ENCODE measurements at regions of chr17 and their contacts with region 1.

Region 1: GRCh38 chr17:8745586-8746500 is 1.2 kb upstream of the CCDC42 start:
- DNase-seq: peak; percentile 83
- H3K4me3 ChIP-seq: peak overlapping the region; percentile 43 to 75 (median 60)
- H3K27ac ChIP-seq: peak overlapping the region in 2 of 4 donors; percentile 8 to 53
- H3K4me1 ChIP-seq: peaks cover 0 to 15% (median 11%) of the 10 kb centered on the region in 4 donors
- H3K27me3 ChIP-seq: no peaks in the 10 kb centered on the region
- CTCF ChIP-seq: peak; percentile 79 to 98 (median 82)
- EP300 ChIP-seq: no peak
- POLR2A ChIP-seq: no peak

Region 2: DNA sequence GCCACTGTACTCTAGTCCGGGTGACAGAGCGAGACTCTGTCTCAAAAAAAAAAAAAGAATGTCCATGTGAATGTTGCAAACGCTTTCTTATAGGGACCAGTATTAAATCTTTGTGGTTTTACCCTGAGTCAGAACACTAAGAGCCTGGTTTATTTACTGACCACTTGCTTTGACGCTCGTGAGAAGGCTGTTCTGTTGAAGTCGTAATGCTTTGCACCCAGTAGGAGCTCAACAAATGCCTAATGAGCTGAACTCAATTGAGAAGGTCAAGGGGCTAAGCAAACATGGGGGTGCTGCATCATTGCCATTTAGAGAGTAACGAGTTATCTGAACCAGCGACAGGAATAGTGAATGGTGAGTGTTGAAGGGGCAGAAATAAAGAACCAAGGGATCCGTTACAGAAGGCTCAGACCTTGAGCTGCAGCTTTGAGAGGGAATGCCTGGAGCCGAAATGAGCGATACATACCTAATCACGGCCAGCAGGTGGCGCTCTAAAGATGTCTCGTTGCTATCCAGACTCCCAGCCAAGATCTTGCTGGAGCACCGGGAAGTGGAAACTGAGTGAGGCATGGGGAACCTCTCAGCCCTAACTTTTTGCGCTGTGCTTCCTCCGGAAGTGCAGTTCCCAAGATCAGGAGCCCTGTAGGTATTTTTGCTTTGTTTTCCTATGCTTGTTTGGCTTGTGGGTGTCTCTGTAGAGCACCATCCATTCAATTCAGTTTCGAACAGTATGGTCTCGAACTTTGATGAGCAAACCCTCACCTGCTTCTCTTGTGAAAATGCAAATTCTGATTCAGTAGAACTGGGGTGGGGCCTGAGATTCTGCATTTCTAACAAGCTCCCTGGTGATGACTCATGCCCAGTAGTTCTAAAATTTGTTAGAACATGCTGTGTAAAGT is 335.6 kb before region 1 on chr17:
- intact Hi-C with region 1: loop called (anchors 1 kb)
- DNase-seq: peak; percentile 94
- H3K4me3 ChIP-seq: no peak overlapping the region
- H3K27ac ChIP-seq: no peak overlapping the region
- H3K4me1 ChIP-seq: peaks cover 0 to 8% (median 0%) of the 10 kb centered on the region in 4 donors
- H3K27me3 ChIP-seq: peaks cover 0 to 2% (median 0%) of the 10 kb centered on the region in 3 donors
- CTCF ChIP-seq: peak; percentile 73 to 86 (median 78)
- EP300 ChIP-seq: no peak
- POLR2A ChIP-seq: no peak

Region 3: DNA sequence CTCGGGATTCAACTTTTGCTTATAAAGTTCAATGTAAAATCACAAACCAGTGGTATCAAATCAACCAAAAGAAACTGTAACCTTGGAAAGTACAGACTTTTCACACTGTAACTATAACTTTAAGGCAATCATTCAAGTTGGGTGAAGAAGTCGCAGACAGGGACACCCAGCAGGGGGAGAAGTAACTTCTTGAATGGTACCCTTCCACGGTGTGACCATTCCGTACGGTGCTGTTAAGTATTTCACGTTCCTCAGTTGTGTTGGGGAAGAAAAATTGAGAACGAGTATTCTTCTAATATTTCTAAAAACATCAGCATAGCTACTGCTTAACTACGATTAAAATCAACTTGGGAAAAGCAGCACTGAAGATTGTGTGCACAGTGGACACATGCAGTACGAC is 171.2 kb before region 1 on chr17:
- intact Hi-C with region 1: loop called (anchors 2 kb)
- DNase-seq: no peak
- H3K4me3 ChIP-seq: no peak overlapping the region
- H3K27ac ChIP-seq: no peak overlapping the region
- H3K4me1 ChIP-seq: no peaks in the 10 kb centered on the region
- H3K27me3 ChIP-seq: no peaks in the 10 kb centered on the region
- CTCF ChIP-seq: peak in 3 of 4 experiments; percentile 12 to 64 (median 37)
- EP300 ChIP-seq: no peak
- POLR2A ChIP-seq: no peak

Region 4: DNA sequence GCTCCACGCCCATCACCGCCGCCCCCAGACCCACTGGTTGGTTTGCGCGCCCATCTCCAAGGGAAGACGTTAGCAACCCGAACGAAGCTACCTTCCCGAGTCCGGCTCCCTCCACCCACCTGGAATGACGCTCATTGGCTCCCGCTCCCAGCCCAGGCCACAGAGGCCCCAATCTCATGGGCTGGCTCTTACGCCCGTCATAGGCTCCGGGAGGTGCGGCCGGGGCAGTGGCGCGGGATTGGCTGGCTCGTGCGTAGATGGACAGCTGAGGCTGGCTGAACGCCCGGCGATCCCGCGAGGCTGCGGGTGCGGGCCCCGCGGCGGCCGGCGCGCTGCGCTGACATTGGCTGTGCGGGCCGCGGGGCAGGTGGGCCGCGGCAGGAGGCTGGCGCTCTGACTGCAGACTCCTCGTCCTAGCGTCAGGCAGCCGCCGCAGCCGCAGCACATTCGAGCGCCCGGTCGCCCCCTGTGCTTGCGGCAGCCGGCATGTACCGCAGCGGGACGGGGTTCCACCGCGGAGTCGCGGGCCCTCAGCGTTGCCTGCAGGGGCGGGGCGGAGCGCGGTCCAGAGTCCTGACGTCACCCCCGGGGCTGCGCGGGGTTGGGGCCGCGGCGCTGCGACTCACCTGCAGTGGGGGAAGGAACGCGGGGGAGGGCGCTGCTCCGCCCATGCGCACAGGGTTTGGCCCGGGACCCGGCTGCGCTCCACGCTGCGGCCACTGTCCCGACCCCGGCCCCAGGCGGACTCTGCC is 114.9 kb before region 1 on chr17:
- intact Hi-C with region 1: loop called (anchors 10 kb)
- DNase-seq: peak; percentile 99
- H3K4me3 ChIP-seq: peak overlapping the region; percentile 79 to 94 (median 88)
- H3K27ac ChIP-seq: peak overlapping the region; percentile 70 to 86 (median 82)
- H3K4me1 ChIP-seq: peaks cover 0 to 28% (median 19%) of the 10 kb centered on the region in 4 donors
- H3K27me3 ChIP-seq: no peaks in the 10 kb centered on the region
- CTCF ChIP-seq: peak in 1 of 4 experiments; percentile 12
- EP300 ChIP-seq: no peak
- POLR2A ChIP-seq: no peak

Region 5: DNA sequence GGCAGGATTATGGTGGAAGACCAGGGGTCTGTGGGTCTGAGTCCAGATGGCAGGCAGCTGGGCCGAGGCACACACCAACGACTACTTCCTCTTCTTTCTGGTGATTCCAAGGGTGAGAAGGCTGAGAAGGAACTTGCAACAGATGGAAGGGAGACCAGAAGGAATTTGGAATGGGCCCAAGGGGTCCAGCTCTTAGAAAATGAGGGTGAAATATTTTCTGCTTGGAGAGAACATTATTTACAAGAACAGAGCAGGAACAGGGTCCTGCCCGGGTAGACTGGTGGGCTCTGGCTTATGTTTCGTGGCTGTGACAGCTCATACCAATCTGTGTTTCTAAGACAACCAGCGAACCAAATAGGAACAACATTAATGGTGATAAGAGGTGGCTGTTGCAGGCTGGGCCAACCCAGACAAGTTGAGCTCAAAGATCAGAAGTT is 37.8 kb before region 1 on chr17:
- intact Hi-C with region 1: no loop called
- DNase-seq: no peak
- H3K4me3 ChIP-seq: no peak overlapping the region
- H3K27ac ChIP-seq: peak overlapping the region in 2 of 4 donors; percentile 36 to 48
- H3K4me1 ChIP-seq: peaks cover 0 to 20% (median 8%) of the 10 kb centered on the region in 4 donors
- H3K27me3 ChIP-seq: no peaks in the 10 kb centered on the region
- CTCF ChIP-seq: no peak
- EP300 ChIP-seq: no peak
- POLR2A ChIP-seq: no peak

Region 6: DNA sequence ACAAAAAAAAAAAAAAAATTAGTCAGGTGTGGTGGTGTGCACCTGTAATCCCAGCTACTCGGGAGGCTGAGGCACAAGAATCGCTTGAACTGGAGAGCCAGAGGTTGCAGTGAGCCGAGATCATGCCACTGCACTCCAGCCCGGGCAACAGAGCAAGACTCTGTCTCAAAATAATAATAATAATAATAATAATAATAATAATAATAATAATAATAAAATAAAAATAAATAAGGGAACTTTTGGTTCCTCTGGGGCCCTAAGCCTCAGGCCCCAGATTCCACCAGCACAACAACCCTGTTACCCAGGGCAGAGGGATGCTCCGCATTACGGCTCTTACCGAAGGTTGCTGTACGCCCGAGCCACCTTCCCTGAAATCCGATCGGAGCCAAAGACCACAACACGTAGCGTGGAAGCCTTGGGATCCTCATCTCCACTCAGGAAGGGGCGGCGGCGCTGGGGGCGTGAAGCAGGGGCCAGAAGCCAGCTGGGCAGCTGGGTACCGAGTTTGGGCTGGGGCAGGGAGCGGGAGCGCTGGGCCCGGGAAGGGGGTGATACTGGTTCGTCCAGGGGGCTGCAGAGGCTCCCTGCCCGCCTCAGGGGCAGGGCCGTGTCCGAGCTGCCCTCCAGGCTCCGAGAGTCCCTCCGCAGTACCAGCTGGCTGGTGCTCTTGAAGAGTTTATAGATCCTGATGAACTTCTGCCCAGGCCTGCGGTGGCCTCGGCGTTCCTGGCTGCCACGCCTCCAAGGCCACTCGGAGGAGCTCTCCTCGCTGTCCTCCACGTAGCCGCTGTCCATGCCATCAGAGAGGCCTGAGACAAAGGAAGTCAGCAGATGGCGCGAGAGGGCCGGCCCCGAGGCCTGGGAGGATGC is 142.2 kb after region 1 on chr17:
- intact Hi-C with region 1: no loop called
- DNase-seq: no peak
- H3K4me3 ChIP-seq: no peak overlapping the region
- H3K27ac ChIP-seq: no peak overlapping the region
- H3K4me1 ChIP-seq: no peaks in the 10 kb centered on the region
- H3K27me3 ChIP-seq: peaks cover 0 to 2% (median 0%) of the 10 kb centered on the region in 3 donors
- CTCF ChIP-seq: no peak
- EP300 ChIP-seq: no peak
- POLR2A ChIP-seq: no peak

Region 7: GRCh38 chr17:8900626-8901585 is 155.1 kb after region 1 on chr17:
- intact Hi-C with region 1: no loop called
- DNase-seq: no peak
- H3K4me3 ChIP-seq: no peak overlapping the region
- H3K27ac ChIP-seq: no peak overlapping the region
- H3K4me1 ChIP-seq: no peaks in the 10 kb centered on the region
- H3K27me3 ChIP-seq: peaks cover 0 to 18% (median 0%) of the 10 kb centered on the region in 3 donors
- CTCF ChIP-seq: no peak
- EP300 ChIP-seq: no peak
- POLR2A ChIP-seq: no peak

Measured in sigmoid colon (tissue), 7 donors.